Pancreas (tissue), 10 donors: ENCODE measurements at regions of chr17 and their contacts with region 1.

Region 1: GRCh38 chr17:50640701-50641351 is 6.1 kb downstream of the ABCC3 start:
- DNase-seq: peak in 3 of 6 donors; percentile 25 to 58 (median 43)
- ATAC-seq: peak in 2 of 4 donors; percentile 7 to 17
- H3K4me3 ChIP-seq: no peak overlapping the region
- H3K27ac ChIP-seq: peak overlapping the region in 3 of 4 donors; percentile 8 to 85 (median 83)
- H3K4me1 ChIP-seq: peaks cover 36 to 61% (median 43%) of the 10 kb centered on the region in 3 donors
- H3K27me3 ChIP-seq: no peaks in the 10 kb centered on the region
- CTCF ChIP-seq: no peak

Region 2: GRCh38 chr17:50681263-50682210 is 40.7 kb after region 1 on chr17:
- intact Hi-C with region 1: loop called in 1 of 3 experiments (anchors 5 kb)
- DNase-seq: peak in 1 of 6 donors; percentile 51
- ATAC-seq: peak in 3 of 4 donors; percentile 22 to 55 (median 39)
- H3K4me3 ChIP-seq: no peak overlapping the region
- H3K27ac ChIP-seq: no peak overlapping the region
- H3K4me1 ChIP-seq: peaks cover 17 to 36% (median 27%) of the 10 kb centered on the region in 3 donors
- H3K27me3 ChIP-seq: no peaks in the 10 kb centered on the region
- CTCF ChIP-seq: no peak

Region 3: GRCh38 chr17:50689956-50690886 is 49.4 kb after region 1 on chr17:
- intact Hi-C with region 1: loop called in 1 of 3 experiments (anchors 2 kb)
- DNase-seq: no peak
- ATAC-seq: no peak
- H3K4me3 ChIP-seq: no peak overlapping the region
- H3K27ac ChIP-seq: peak overlapping the region; percentile 22 to 90 (median 56)
- H3K4me1 ChIP-seq: peaks cover 77 to 92% (median 84%) of the 10 kb centered on the region in 3 donors
- H3K27me3 ChIP-seq: no peaks in the 10 kb centered on the region
- CTCF ChIP-seq: no peak